ENCODE measurements at regions of chr11 and their contacts with region 1.

Region 1: GRCh38 chr11:60485986-60486385 is 6.6 kb upstream of the MS4A12 start:
- DNase-seq: peak; percentile 95
- H3K4me3 ChIP-seq: no peak overlapping the region
- H3K27ac ChIP-seq: peak overlapping the region; percentile 9
- H3K4me1 ChIP-seq: peaks cover 52% of the 10 kb centered on the region
- CTCF ChIP-seq: peak; percentile 100

Region 2: DNA sequence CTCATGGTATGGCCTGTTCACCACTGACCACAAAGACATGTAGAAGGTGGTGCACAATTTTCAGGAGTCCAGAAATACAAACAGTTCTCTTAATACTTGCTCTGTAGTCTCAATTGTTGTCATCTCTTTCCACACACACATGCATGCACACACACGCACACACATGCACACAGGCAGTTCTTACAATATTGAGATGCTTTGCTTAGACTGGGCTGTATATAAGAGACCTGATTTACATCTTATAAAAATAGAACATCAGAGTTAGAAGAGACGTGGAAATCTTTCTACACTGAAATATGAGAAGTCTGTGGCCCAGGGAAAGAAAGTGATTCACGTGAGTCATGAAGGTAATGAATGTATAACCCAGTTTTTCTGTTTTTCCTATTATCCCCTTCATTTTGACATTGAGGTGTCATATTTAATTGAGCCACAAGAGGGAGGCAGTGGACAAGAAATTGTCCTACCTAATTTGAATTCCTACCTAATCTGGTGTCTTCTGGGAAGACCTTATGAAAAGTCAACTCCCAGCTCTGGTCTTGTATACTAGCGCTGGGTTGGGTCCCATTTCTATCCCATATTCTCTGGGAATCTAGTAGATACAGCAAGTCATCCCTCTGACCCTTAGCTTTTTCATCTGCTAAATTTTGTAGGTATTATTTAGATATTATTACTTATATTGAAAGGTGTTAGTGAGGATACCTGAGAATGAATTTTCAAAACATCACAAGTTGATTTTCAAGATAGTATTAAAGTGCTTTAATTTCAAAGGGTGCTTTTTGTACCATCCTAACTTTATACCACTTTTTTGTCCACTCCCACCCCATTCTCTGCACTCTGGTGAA is 220.4 kb before region 1 on chr11:
- CTCF ChIA-PET with region 1: no interaction called
- POLR2A ChIA-PET with region 1: no interaction called
- intact Hi-C with region 1: loop called (anchors 1 kb)
- DNase-seq: peak; percentile 61
- H3K4me3 ChIP-seq: no peak overlapping the region
- H3K27ac ChIP-seq: no peak overlapping the region
- H3K4me1 ChIP-seq: no peaks in the 10 kb centered on the region
- CTCF ChIP-seq: peak; percentile 92

Region 3: DNA sequence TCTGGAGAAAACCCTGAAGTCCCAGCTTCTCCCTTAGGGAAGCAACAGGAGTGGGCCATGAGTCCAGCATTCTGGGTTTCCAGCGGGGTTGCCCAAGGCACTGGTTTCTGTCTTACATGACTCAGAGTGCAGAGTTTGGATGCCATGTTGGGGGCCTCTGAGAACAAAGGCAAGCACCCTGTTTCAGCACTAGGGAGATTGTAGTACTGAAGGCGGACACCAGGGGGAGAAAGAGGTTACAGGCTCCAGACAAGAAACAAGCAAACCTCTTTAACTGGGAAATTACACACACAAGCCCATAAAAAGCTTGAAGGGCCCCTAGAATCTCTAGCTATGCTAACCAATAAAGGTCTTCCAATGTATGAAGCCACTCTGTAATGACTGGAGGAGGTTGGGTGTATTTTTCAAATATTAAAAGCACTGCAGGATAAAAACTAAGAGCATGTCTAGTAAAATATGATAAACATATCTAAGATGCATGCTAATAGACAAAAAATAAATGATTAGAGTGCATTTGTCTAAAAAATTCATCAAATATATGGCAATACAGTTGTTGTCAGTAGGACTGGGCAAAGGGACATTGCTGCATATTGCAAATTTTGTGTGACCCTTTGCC is 151.9 kb before region 1 on chr11:
- CTCF ChIA-PET with region 1: interaction called, 3 read pairs
- POLR2A ChIA-PET with region 1: interaction called, 3 read pairs
- intact Hi-C with region 1: loop called (anchors 1 kb)
- DNase-seq: peak; percentile 73
- H3K4me3 ChIP-seq: no peak overlapping the region
- H3K27ac ChIP-seq: no peak overlapping the region
- H3K4me1 ChIP-seq: no peaks in the 10 kb centered on the region
- CTCF ChIP-seq: peak; percentile 88

Region 4: DNA sequence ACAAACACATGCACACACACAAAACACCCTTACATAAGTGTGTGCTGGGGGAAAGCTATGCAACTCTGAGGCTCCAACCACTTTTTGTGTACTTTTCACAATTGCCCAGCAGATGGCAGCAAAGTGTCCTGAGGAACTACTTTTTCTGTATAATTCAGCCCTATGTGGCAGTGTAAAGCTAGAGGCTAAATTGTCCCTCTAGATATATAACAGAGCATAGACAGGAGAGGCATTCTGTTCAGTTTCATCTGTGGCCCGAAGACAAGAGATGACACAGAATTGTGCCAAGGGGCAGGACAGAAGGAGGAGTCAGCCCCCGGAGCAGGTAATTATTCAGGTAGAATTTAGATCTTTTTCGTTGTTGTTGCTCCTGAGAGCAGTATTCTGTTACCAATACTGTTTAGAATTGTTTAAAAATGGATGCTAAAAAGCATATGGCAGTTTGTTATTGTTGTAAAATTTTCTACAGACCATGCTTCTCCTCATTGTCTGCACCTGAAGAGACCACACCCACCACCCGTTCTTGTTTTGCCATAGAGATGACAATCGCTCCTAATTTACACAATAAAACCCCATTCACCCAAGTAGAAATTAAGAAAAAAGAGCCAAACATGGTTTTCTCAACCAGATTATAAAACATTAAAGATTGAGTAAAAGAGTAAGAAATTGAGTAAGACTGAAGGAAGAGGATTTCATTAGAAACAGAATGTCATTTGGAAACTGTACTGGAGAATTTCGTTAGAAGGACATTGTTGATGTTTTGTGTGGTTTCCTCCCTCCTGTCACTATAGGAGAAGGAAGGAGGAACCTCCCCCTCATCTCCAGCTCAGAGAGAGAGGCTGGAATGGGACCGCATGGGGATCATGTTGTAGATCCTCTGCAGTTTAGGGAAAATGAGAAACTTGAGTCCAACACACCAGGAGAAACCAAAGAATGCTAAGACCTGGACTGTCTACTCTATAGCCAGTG is 122.2 kb before region 1 on chr11:
- CTCF ChIA-PET with region 1: interaction called, 23 read pairs
- POLR2A ChIA-PET with region 1: interaction called, 13 read pairs
- intact Hi-C with region 1: loop called (anchors 1 kb)
- DNase-seq: peak; percentile 91
- H3K4me3 ChIP-seq: peak overlapping the region; percentile 25
- H3K27ac ChIP-seq: peak overlapping the region; percentile 43
- H3K4me1 ChIP-seq: peaks cover 51% of the 10 kb centered on the region
- CTCF ChIP-seq: peak; percentile 96

Region 5: DNA sequence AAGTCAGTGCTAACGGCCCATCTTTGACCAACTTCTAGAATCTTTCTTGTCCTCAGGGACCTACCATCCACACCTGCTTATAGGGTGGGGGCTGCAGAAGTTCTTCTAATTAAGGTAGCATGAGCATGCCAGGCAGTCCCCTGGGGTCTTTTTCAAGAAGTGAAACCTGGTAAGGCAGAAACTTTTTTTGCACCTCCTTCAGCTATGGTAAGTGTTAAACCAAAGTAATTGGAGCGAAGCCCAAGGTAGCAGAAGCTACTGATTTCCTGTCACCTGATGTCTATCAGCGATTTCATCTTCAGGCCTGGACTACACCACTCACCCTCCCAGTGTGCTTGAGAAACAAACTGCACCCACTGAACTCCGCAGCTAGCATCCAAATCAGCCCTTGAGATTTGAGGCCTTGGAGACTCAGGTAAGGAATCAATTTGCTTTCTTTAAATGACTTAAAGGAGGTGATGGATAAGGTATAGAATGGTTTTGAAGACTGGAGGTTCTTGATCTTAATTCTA is 30.4 kb before region 1 on chr11 and contains the start of gene MS4A1:
- CTCF ChIA-PET with region 1: interaction called, 15 read pairs
- POLR2A ChIA-PET with region 1: interaction called, 123 read pairs
- intact Hi-C with region 1: no loop called
- DNase-seq: peak; percentile 100
- H3K4me3 ChIP-seq: peak within 1 kb of the TSS; percentile 84
- H3K27ac ChIP-seq: peak within 1 kb of the TSS; percentile 100
- H3K4me1 ChIP-seq: peaks cover 49% of the 10 kb centered on the region
- CTCF ChIP-seq: no peak
- total RNA-seq, gene MS4A1: 435 and 488 TPM in 2 replicates

Region 6: GRCh38 chr11:60498853-60499252 is 12.9 kb after region 1 on chr11:
- CTCF ChIA-PET with region 1: interaction called, 3 read pairs
- POLR2A ChIA-PET with region 1: interaction called, 17 read pairs
- intact Hi-C with region 1: no loop called
- DNase-seq: peak; percentile 95
- H3K4me3 ChIP-seq: peak overlapping the region; percentile 47
- H3K27ac ChIP-seq: peak overlapping the region; percentile 96
- H3K4me1 ChIP-seq: peaks cover 49% of the 10 kb centered on the region
- CTCF ChIP-seq: no peak

Region 7: GRCh38 chr11:60615497-60615896 is 129.5 kb after region 1 on chr11:
- CTCF ChIA-PET with region 1: no interaction called
- POLR2A ChIA-PET with region 1: interaction called, 4 read pairs
- intact Hi-C with region 1: loop called (anchors 1 kb)
- DNase-seq: no peak
- H3K4me3 ChIP-seq: no peak overlapping the region
- H3K27ac ChIP-seq: no peak overlapping the region
- H3K4me1 ChIP-seq: peaks cover 4% of the 10 kb centered on the region
- CTCF ChIP-seq: no peak

Measured in OCI-LY7 (cell line).